Caco-2 (cell line): ENCODE measurements at regions of chr11 and their contacts with region 1.

Region 1: GRCh38 chr11:29159552-29160465 is 857.0 kb downstream of the KCNA4 start:
- DNase-seq: peak; percentile 55 to 71
- H3K4me3 ChIP-seq: no peak overlapping the region
- H3K4me3 Mint-ChIP-seq: no peak overlapping the region
- H3K27ac Mint-ChIP-seq: no peak overlapping the region
- H3K4me1 ChIP-seq: no peaks in the 10 kb centered on the region
- H3K4me1 Mint-ChIP-seq: peaks cover 7% of the 10 kb centered on the region
- H3K27me3 ChIP-seq: no peaks in the 10 kb centered on the region
- H3K27me3 Mint-ChIP-seq: no peaks in the 10 kb centered on the region
- CTCF ChIP-seq: peak; percentile 80 to 81

Region 2: GRCh38 chr11:27642954-27643353 is 1516.9 kb before region 1 on chr11:
- CTCF ChIA-PET with region 1: interaction called, 5 read pairs
- POLR2A ChIA-PET with region 1: no interaction called
- intact Hi-C with region 1: loop called (anchors 1 kb)
- DNase-seq: peak in 1 of 2 experiments; percentile 13
- H3K4me3 ChIP-seq: no peak overlapping the region
- H3K4me3 Mint-ChIP-seq: no peak overlapping the region
- H3K27ac Mint-ChIP-seq: no peak overlapping the region
- H3K4me1 ChIP-seq: no peaks in the 10 kb centered on the region
- H3K4me1 Mint-ChIP-seq: no peaks in the 10 kb centered on the region
- H3K27me3 ChIP-seq: no peaks in the 10 kb centered on the region
- H3K27me3 Mint-ChIP-seq: no peaks in the 10 kb centered on the region
- CTCF ChIP-seq: no peak

Region 3: GRCh38 chr11:28701760-28702449 is 457.9 kb before region 1 on chr11:
- CTCF ChIA-PET with region 1: no interaction called
- POLR2A ChIA-PET with region 1: no interaction called
- intact Hi-C with region 1: no loop called
- DNase-seq: no peak
- H3K4me3 ChIP-seq: no peak overlapping the region
- H3K4me3 Mint-ChIP-seq: no peak overlapping the region
- H3K27ac Mint-ChIP-seq: no peak overlapping the region
- H3K4me1 ChIP-seq: peaks cover 3% of the 10 kb centered on the region; the same call in 1 of the 2 replicates
- H3K4me1 Mint-ChIP-seq: peaks cover 23% of the 10 kb centered on the region
- H3K27me3 ChIP-seq: no peaks in the 10 kb centered on the region
- H3K27me3 Mint-ChIP-seq: no peaks in the 10 kb centered on the region
- CTCF ChIP-seq: no peak

Region 4: GRCh38 chr11:28808771-28809170 is 351.0 kb before region 1 on chr11:
- CTCF ChIA-PET with region 1: no interaction called
- POLR2A ChIA-PET with region 1: no interaction called
- intact Hi-C with region 1: loop called (anchors 10 kb)
- DNase-seq: no peak
- H3K4me3 ChIP-seq: no peak overlapping the region
- H3K4me3 Mint-ChIP-seq: no peak overlapping the region
- H3K27ac Mint-ChIP-seq: no peak overlapping the region
- H3K4me1 ChIP-seq: no peaks in the 10 kb centered on the region
- H3K4me1 Mint-ChIP-seq: no peaks in the 10 kb centered on the region
- H3K27me3 ChIP-seq: no peaks in the 10 kb centered on the region
- H3K27me3 Mint-ChIP-seq: no peaks in the 10 kb centered on the region
- CTCF ChIP-seq: no peak

Region 5: GRCh38 chr11:29019960-29020683 is 139.7 kb before region 1 on chr11:
- CTCF ChIA-PET with region 1: interaction called, 8 read pairs
- POLR2A ChIA-PET with region 1: no interaction called
- intact Hi-C with region 1: loop called (anchors 2 kb)
- DNase-seq: peak in 1 of 2 experiments; percentile 20
- H3K4me3 ChIP-seq: no peak overlapping the region
- H3K4me3 Mint-ChIP-seq: no peak overlapping the region
- H3K27ac Mint-ChIP-seq: no peak overlapping the region
- H3K4me1 ChIP-seq: no peaks in the 10 kb centered on the region
- H3K4me1 Mint-ChIP-seq: no peaks in the 10 kb centered on the region
- H3K27me3 ChIP-seq: no peaks in the 10 kb centered on the region
- H3K27me3 Mint-ChIP-seq: no peaks in the 10 kb centered on the region
- CTCF ChIP-seq: peak; percentile 45 to 50

Region 6: DNA sequence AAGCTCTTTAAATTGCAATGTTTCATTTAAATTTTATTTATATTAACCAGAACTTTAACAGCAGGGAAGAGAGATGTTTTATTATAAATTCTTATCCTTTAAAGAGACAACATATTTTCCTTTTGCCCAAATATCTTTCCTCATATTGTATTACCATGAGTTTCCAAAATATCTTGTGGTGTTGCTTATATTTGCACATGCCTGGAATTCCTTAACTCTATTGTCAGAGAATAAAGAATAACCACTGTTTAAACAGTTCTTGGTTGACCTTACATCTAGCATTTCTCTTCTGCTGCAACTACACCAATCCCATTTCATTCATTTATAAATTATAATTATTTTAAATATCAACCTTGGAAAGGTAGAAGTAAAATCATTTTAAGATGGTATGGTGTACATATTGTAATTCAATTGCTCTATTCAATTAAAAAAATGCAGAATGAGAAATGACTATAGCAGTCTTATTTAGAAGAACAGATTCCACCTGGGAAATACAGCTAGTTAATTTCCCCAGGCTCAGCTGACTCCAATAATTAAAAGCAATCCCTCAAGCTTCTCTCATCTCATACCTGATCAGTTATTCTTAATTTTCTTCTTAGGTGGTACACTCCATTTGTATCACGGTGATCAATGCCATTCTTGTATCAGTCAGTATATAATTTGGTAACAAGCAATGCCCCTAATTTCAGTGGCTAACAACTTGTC is 66.2 kb before region 1 on chr11:
- CTCF ChIA-PET with region 1: interaction called, 3 read pairs
- POLR2A ChIA-PET with region 1: no interaction called
- intact Hi-C with region 1: loop called (anchors 5 kb)
- DNase-seq: peak in 1 of 2 experiments; percentile 4
- H3K4me3 ChIP-seq: no peak overlapping the region
- H3K4me3 Mint-ChIP-seq: peak overlapping the region; percentile 27
- H3K27ac Mint-ChIP-seq: peak overlapping the region; percentile 76
- H3K4me1 ChIP-seq: peaks cover 22% of the 10 kb centered on the region
- H3K4me1 Mint-ChIP-seq: peaks cover 10% of the 10 kb centered on the region
- H3K27me3 ChIP-seq: no peaks in the 10 kb centered on the region
- H3K27me3 Mint-ChIP-seq: no peaks in the 10 kb centered on the region
- CTCF ChIP-seq: no peak

Region 7: DNA sequence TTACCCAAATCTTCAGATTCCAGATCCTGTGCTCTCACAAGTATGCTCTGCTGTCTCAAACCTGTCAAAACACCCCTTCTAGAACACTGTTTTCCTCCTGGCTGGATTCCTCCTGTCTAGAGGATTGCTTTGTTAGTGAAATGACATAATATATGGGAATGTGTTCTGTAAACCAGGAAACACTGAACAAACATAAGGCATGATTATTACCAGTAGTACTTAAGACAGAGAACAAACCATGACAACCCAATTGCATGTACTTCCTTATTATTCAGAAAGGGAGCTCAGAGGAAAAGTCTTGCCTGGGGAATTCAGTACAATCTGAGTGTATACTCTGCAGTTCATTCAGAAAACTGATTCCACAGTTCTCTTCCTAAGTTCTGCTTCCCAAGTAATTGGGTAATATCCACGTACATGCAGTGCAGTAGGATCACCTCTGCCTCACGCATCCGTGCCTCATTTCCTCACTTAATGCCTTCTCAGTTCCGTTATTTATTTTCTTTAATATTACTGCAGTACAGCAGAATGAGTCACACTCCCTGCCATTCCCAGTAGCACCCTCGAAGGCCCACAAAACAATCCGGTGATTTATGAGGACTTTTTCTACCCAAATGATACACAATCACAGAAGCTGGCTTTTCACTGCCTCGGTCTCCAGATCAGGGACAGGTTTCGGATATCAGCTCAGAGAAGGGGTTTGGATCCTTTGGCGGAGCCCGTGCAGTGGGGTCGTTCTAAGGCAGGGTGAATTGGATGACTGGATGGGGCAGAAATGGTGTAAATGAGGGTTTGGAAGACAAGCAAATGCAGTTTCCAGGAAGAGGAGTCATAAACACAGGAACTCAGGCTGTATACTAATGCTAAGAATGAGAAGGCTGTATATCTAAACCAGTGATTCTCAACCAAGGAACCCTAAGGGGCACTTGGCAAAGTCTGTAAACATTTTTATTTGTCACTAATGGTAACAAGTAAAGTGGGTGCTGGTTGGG is 39.8 kb before region 1 on chr11:
- CTCF ChIA-PET with region 1: no interaction called
- POLR2A ChIA-PET with region 1: no interaction called
- intact Hi-C with region 1: no loop called
- DNase-seq: peak in 1 of 2 experiments; percentile 15
- H3K4me3 ChIP-seq: no peak overlapping the region
- H3K4me3 Mint-ChIP-seq: no peak overlapping the region
- H3K27ac Mint-ChIP-seq: peak overlapping the region; percentile 49
- H3K4me1 ChIP-seq: peaks cover 11% of the 10 kb centered on the region; the same call in 1 of the 2 replicates
- H3K4me1 Mint-ChIP-seq: peaks cover 11% of the 10 kb centered on the region
- H3K27me3 ChIP-seq: no peaks in the 10 kb centered on the region
- H3K27me3 Mint-ChIP-seq: no peaks in the 10 kb centered on the region
- CTCF ChIP-seq: no peak

Region 8: GRCh38 chr11:29328961-29329441 is 169.2 kb after region 1 on chr11:
- CTCF ChIA-PET with region 1: interaction called, 6 read pairs
- POLR2A ChIA-PET with region 1: no interaction called
- intact Hi-C with region 1: loop called (anchors 1 kb)
- DNase-seq: peak in 1 of 2 experiments; percentile 54
- H3K4me3 ChIP-seq: no peak overlapping the region
- H3K4me3 Mint-ChIP-seq: no peak overlapping the region
- H3K27ac Mint-ChIP-seq: no peak overlapping the region
- H3K4me1 ChIP-seq: peaks cover 13% of the 10 kb centered on the region
- H3K4me1 Mint-ChIP-seq: peaks cover 14% of the 10 kb centered on the region
- H3K27me3 ChIP-seq: no peaks in the 10 kb centered on the region
- H3K27me3 Mint-ChIP-seq: no peaks in the 10 kb centered on the region
- CTCF ChIP-seq: peak; percentile 70 to 78

Region 9: GRCh38 chr11:29645373-29645772 is 485.6 kb after region 1 on chr11:
- CTCF ChIA-PET with region 1: no interaction called
- POLR2A ChIA-PET with region 1: no interaction called
- intact Hi-C with region 1: no loop called
- DNase-seq: no peak
- H3K4me3 ChIP-seq: no peak overlapping the region
- H3K4me3 Mint-ChIP-seq: no peak overlapping the region
- H3K27ac Mint-ChIP-seq: no peak overlapping the region
- H3K4me1 ChIP-seq: no peaks in the 10 kb centered on the region
- H3K4me1 Mint-ChIP-seq: no peaks in the 10 kb centered on the region
- H3K27me3 ChIP-seq: no peaks in the 10 kb centered on the region
- H3K27me3 Mint-ChIP-seq: no peaks in the 10 kb centered on the region
- CTCF ChIP-seq: no peak